ENCODE measurements at regions of chr9 and their contacts with region 1.

Region 1: DNA sequence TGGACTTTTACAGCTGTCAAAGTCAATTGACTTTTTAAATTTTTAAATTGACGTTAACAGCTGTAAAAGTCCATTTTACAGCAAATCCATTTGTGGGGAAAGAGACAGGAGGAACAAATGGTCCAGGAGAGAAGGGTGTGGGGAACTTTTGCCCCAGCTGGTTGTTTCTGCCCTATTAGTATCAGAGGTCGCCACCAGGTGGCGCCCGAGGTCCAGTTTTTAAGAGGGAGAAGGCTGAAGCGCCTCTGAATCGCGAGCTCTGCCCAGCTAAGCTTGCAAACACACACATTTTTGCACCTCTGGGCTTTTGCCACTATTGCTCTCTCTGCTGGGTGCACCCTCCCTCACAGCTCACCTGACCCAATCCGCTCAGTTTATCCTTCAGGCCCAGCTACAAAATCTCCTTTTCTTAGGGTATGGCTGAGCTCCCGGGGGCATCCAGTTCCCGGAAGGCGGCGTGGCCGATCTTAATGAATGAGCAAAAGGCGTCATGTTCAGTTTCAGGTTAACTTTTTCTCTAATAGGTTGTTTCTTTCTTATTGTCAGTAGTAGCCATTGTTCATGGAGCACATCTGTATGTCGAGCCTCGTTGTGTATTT is 6.3 kb upstream of the TTLL11 start:
- DNase-seq: peak; percentile 85
- ATAC-seq: peak; percentile 87
- H3K4me3 ChIP-seq: no peak overlapping the region
- H3K4me3 Mint-ChIP-seq: peak overlapping the region; percentile 30
- H3K27ac ChIP-seq: no peak overlapping the region
- H3K27ac Mint-ChIP-seq: no peak overlapping the region
- H3K4me1 ChIP-seq: peaks cover 10 to 11% of the 10 kb centered on the region in 2 donors
- H3K4me1 Mint-ChIP-seq: peaks cover 12% of the 10 kb centered on the region
- H3K27me3 ChIP-seq: peaks cover 0 to 7% (median 3%) of the 10 kb centered on the region in 4 experiments
- H3K27me3 Mint-ChIP-seq: peaks cover 12% of the 10 kb centered on the region
- CTCF ChIP-seq: peak; percentile 88

Region 2: DNA sequence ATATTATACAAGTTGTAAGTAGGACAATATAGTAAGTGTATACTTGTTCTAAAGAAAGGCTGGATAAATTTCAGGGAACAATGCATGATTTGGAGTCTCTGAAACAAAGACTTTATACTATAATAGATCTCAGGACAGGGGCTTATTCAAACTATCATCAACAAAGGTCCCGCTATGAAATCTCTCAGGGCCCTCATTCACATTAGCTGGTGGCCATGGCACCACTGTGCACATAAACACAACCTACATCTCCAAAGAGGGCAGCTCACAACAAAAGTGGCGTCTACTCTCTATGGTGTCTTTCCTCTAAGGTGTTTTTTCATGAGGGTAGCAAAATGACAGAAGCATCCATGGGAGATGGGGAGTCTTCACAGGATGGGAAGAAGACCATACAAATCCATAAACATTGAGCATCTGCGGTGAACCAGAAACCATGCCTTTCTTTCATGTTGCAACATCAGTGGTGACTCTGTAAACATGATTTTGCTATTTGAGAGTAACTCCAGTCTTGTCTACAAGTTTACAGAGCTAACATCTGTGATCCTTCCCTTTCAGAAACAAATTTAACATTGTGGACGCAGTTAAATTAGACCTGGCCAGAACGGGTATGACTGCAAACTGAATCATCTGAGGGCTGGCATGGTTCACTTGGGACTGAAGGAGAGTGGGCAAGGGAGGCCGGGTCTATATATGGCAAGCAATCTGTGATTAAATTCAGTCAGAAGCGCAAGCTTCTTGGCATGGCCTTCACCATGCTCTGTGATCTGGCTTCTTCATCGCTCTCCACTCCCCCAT is 11.8 kb before region 1 on chr9:
- CTCF ChIA-PET with region 1: interaction called, 52 read pairs
- POLR2A ChIA-PET with region 1: no interaction called
- intact Hi-C with region 1: no loop called
- DNase-seq: no peak
- ATAC-seq: no peak
- H3K4me3 ChIP-seq: no peak overlapping the region
- H3K4me3 Mint-ChIP-seq: no peak overlapping the region
- H3K27ac ChIP-seq: no peak overlapping the region
- H3K27ac Mint-ChIP-seq: no peak overlapping the region
- H3K4me1 ChIP-seq: peaks cover 14% of the 10 kb centered on the region in 2 donors
- H3K4me1 Mint-ChIP-seq: peaks cover 27% of the 10 kb centered on the region
- H3K27me3 ChIP-seq: no peaks in the 10 kb centered on the region
- H3K27me3 Mint-ChIP-seq: no peaks in the 10 kb centered on the region
- CTCF ChIP-seq: no peak

Region 3: GRCh38 chr9:122168356-122168755 is 69.0 kb after region 1 on chr9:
- CTCF ChIA-PET with region 1: no interaction called
- POLR2A ChIA-PET with region 1: no interaction called
- intact Hi-C with region 1: no loop called
- DNase-seq: no peak
- ATAC-seq: no peak
- H3K4me3 ChIP-seq: no peak overlapping the region
- H3K4me3 Mint-ChIP-seq: no peak overlapping the region
- H3K27ac ChIP-seq: no peak overlapping the region
- H3K27ac Mint-ChIP-seq: no peak overlapping the region
- H3K4me1 ChIP-seq: no peaks in the 10 kb centered on the region
- H3K4me1 Mint-ChIP-seq: no peaks in the 10 kb centered on the region
- H3K27me3 ChIP-seq: peaks cover 0 to 28% (median 6%) of the 10 kb centered on the region in 4 experiments
- H3K27me3 Mint-ChIP-seq: peaks cover 57% of the 10 kb centered on the region
- CTCF ChIP-seq: no peak

Region 4: GRCh38 chr9:122810306-122810946 is 711.1 kb after region 1 on chr9:
- CTCF ChIA-PET with region 1: interaction called, 44 read pairs
- POLR2A ChIA-PET with region 1: no interaction called
- intact Hi-C with region 1: no loop called
- DNase-seq: peak; percentile 82
- ATAC-seq: peak; percentile 91
- H3K4me3 ChIP-seq: no peak overlapping the region
- H3K4me3 Mint-ChIP-seq: no peak overlapping the region
- H3K27ac ChIP-seq: no peak overlapping the region
- H3K27ac Mint-ChIP-seq: no peak overlapping the region
- H3K4me1 ChIP-seq: peaks cover 5 to 8% of the 10 kb centered on the region in 2 donors
- H3K4me1 Mint-ChIP-seq: peaks cover 8% of the 10 kb centered on the region
- H3K27me3 ChIP-seq: no peaks in the 10 kb centered on the region
- H3K27me3 Mint-ChIP-seq: no peaks in the 10 kb centered on the region
- CTCF ChIP-seq: peak; percentile 88

Measured in B cell (primary cell).